ENCODE measurements at regions of chr11 and their contacts with region 1.

Region 1: DNA sequence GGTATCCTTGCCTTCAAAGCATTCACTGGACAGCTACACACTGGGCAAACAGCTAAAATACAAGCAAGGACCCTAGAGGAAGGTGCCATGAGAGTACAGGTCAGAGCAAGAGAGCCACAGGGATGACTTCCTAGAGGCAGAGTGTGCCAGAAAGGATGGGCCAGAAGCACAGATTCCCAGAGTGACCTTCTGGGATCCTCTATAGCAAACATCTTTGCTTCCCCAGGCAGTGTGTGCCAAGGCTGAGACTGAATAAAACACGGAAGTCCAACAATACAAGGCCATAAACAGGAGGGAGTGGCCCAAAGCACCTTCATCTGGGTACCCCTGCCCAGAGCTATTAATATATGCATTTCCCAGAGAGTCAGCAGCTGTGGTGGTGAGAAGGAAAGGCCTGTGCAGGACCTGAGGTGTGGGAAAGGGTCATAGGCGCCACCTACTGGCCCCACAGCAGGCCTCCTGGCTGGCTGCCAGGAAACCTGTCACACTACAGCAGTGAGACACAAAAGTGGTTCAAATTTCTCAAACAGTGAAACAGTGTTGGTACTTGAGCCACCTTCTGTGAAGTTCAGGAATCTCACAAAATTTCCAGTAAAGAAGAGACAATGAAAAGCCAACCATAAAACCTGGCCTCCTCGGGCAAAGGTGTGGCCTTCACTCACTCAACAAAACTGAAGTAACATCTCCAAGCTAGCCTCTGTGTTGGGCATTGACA is 20.3 kb downstream of the CLPB start:
- DNase-seq: peak; percentile 73 to 89
- H3K4me3 ChIP-seq: no peak overlapping the region
- H3K27ac ChIP-seq: no peak overlapping the region
- H3K4me1 ChIP-seq: no peaks in the 10 kb centered on the region
- H3K27me3 ChIP-seq: no peaks in the 10 kb centered on the region
- CTCF ChIP-seq: peak; percentile 96

Region 2: DNA sequence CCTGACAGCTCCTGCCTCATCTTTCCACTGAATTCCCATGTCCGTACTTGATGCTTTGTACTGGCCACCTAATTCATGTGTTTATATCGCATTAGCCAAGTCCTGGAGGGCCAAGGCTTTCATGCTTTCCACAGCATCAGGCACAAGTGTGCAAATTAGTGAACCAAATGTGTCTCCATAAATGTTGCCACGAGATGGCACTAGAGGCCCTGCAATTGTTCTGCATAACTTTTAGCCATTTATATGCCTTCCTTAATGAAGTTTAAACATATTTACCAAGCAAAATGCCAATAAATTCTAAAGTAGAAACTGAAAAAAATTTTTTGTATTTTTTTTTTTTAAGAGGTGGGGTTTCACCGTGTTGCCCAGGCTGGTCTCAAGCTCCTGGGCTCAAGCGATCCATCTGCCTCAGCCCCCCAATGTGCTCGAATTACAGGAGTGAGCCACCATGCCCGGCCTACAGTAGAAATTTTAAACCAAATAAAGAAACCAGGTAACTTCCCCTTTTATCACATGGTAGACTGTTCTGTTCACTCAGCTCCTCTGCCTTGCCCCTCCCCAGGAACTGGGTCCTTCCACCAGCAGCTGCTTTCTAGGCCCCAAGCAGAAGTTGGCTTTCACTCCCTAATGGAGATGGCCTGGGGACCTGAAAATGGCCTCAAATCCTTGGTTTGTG is 436.2 kb before region 1 on chr11:
- CTCF ChIA-PET with region 1: no interaction called
- POLR2A ChIA-PET with region 1: no interaction called
- intact Hi-C with region 1: loop called (anchors 1 kb)
- DNase-seq: peak; percentile 35 to 40
- H3K4me3 ChIP-seq: no peak overlapping the region
- H3K27ac ChIP-seq: no peak overlapping the region
- H3K4me1 ChIP-seq: no peaks in the 10 kb centered on the region
- H3K27me3 ChIP-seq: no peaks in the 10 kb centered on the region
- CTCF ChIP-seq: peak; percentile 85

Region 3: DNA sequence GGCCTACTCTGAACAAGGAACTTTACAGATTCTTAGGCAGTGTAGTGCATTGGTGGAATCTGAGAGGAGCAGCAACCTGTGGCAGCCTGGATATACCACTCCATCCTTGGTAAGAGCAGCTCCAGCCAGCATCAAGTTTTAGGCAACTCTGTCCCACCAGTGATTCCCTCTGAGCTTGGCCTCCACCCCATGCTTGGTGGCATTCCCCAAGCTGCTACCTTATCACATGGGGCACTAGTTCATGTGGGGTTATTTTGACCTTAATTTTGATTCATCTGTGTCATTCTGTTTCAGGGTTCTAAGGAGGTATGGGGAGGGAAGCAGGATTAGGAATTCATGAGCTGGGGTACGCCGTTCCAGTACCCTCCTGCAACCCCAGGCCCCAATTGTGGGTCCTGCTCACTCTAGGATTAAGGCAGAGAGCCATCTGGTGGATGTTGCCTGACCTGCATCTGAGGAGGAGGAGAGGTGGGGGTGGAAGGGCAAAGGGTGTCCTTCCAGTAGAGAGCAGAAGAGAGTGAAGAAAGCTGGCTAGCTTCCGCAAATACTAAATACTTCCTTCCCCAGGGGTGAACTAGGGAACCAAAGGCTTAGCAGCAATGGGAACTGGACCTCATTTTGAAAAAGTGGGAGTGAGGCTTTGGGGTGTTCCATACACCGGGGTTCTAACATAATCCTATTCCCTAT is 322.9 kb before region 1 on chr11:
- CTCF ChIA-PET with region 1: no interaction called
- POLR2A ChIA-PET with region 1: no interaction called
- intact Hi-C with region 1: loop called (anchors 1 kb)
- DNase-seq: peak in 1 of 2 experiments; percentile 60
- H3K4me3 ChIP-seq: no peak overlapping the region
- H3K27ac ChIP-seq: 0 out of 2 replicates have a peak overlapping the region, but pooled peaks have one; percentile 8
- H3K4me1 ChIP-seq: no peaks in the 10 kb centered on the region
- H3K27me3 ChIP-seq: no peaks in the 10 kb centered on the region
- CTCF ChIP-seq: peak; percentile 93

Region 4: GRCh38 chr11:72112321-72113219 is 301.5 kb before region 1 on chr11 and contains the start of gene ANAPC15:
- CTCF ChIA-PET with region 1: no interaction called
- POLR2A ChIA-PET with region 1: no interaction called
- intact Hi-C with region 1: loop called (anchors 1 kb)
- DNase-seq: peak; percentile 97 to 99
- H3K4me3 ChIP-seq: peak within 1 kb of the TSS; percentile 56
- H3K27ac ChIP-seq: peak within 1 kb of the TSS; percentile 70
- H3K4me1 ChIP-seq: peaks cover 14% of the 10 kb centered on the region
- H3K27me3 ChIP-seq: no peaks in the 10 kb centered on the region
- CTCF ChIP-seq: no peak
- total RNA-seq, gene ANAPC15: 77.2 and 97.8 TPM in 2 replicates

Region 5: DNA sequence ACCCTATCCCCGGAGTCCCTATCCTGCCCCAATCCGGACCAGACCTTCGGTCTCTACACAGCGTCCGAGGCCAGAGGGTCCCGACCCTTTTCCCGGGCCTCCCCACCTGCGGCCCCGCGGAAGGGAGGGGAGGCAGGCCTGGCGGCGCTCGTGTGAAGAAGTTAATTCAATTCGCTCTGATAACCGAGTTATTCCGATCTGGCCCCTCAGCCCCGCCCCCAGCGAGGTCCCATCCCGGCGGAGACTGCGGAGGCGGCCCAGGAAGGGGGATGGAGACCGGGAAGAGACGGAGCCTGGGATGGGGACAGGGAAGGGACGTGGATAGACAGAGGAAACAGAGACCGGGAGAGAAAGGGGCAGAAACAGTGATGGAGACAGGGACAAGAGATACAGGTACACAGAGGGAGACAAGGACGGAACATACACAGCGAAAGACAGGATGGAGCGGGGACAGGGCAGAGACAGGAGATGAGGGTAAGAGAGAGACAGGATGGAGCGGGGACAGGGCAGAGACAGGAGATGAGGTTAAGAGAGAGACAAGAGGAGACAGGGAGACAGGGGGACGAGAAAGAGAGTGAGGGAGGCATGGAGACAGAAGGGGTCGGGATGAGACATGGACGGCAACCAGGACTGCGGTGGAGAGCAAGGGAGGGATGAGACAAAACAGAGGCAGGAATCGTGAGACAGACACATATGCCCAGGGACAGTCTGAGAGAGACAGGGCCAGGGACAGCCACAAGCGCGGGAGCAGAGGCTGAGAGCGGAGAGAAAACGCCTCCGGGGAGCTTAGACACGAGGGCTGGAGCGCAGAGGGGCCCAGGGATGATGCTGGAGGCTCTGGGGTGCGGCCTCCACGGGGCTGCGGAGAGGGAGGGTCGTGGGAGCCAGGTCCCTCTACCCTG is 169.5 kb before region 1 on chr11:
- CTCF ChIA-PET with region 1: no interaction called
- POLR2A ChIA-PET with region 1: no interaction called
- intact Hi-C with region 1: loop called (anchors 5 kb)
- DNase-seq: no peak
- H3K4me3 ChIP-seq: no peak overlapping the region
- H3K27ac ChIP-seq: no peak overlapping the region
- H3K4me1 ChIP-seq: no peaks in the 10 kb centered on the region
- H3K27me3 ChIP-seq: peaks cover 31% of the 10 kb centered on the region; the same call in 1 of the 2 replicates
- CTCF ChIP-seq: no peak

Region 6: DNA sequence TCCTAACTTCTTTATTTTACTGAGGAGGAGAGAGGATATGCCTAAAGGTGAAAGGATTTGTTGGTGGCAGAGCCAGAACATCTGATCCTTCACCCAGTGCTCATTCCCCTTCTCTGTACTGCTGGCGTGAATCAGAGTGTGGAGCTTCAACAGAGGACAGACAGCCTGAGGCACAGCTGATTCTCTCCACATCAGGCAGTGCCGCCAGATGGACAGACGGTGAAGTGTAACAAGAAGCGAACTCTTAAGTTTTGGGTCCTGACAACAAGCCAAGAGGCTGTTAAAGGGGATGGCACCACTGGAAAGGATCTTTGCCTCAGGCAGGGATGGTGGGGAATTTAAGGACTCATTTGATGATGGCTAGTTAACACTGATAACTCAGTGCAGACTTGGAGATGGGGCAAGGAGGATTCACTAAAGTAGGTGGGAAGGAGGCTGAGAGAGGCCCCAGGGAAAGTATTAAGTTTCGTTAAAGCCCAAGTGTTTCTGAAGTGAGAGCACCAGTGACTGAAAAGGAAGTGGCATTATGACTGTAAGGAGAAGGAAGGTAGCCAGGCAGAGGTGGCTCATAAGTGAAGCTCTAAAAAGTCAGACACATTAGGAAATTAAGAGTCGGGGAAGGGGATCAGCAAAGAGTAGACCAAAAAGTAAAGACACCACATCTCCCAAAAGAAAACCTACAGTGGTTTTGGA is 61.1 kb before region 1 on chr11:
- CTCF ChIA-PET with region 1: no interaction called
- POLR2A ChIA-PET with region 1: no interaction called
- intact Hi-C with region 1: loop called (anchors 5 kb)
- DNase-seq: no peak
- H3K4me3 ChIP-seq: no peak overlapping the region
- H3K27ac ChIP-seq: no peak overlapping the region
- H3K4me1 ChIP-seq: no peaks in the 10 kb centered on the region
- H3K27me3 ChIP-seq: no peaks in the 10 kb centered on the region
- CTCF ChIP-seq: no peak

Region 7: DNA sequence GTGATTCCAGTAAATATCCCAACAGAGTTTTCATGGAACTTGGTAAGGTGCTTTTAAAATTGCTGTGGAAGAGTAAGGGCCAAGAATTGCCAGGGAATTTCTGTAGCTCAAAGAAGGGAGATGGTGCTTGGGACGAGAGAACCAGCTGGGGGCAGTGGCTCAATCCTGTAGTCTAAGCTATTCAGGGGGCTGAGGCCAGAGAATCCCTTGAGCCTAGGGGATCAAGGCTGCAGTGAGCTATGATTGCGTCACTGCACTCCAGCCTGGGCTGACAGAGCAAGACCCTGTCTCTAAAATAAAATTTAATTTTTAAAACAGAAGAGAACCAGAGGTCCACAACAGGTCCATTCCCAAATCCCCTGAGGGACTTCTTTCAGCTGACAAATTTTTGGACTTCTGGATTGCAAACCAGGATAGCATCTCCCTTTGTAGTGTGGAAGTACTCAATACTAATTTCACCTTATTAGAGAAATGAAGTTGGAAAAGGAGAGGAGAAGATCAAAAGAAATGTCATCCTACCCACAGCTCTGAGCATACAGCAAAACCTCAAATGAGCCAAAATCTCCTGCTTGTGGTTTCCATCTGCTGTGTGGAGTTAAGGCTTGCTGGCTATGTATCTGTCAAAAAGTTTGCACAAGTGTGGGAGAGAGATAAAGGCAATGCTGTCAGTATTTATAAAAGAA is 79.5 kb after region 1 on chr11:
- CTCF ChIA-PET with region 1: no interaction called
- POLR2A ChIA-PET with region 1: no interaction called
- intact Hi-C with region 1: no loop called
- DNase-seq: no peak
- H3K4me3 ChIP-seq: no peak overlapping the region
- H3K27ac ChIP-seq: no peak overlapping the region
- H3K4me1 ChIP-seq: no peaks in the 10 kb centered on the region
- H3K27me3 ChIP-seq: no peaks in the 10 kb centered on the region
- CTCF ChIP-seq: no peak

Region 8: DNA sequence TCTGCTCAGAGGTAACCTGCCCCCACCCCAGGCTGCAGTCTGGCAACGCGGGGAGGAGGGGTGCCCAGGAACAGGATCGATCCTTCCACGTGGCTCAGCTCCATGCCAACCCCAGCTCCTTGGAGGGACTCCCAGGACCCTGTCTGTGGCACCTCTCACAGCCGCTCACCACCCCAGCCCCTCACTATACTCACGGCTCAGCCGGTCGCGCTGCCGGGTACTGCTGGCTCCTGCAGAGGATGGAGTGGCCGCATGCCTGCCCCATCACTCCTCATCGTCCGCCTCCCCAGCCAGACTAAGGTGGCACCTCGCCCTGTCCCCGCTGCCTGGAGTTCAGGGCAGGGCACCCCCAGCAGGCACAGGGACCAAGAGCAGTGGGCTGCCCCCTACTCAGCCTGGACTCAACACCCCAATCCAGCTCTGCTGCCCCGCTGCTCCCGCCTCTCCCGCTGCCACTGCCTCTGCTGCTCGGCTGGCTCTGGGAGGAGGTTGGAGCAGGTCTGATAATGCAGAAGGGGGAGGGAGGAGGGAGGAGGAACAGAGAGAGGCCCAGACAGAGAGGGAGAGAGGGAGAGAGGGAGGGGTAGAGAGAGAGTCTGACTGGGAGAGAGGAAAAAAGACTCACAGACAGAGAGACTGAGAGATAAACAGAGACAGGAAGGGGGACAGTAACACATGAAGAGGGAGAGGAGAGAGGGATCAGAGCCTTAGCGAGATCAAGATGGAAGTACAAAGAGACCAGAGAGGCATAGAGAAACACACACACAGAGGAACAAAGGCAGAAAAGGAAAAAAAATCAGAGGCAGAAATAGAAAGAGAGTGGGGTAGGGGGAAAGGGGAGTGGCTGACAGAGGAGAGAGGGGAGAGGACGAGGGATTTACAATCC is 260.1 kb after region 1 on chr11 and contains the start of gene PDE2A:
- CTCF ChIA-PET with region 1: no interaction called
- POLR2A ChIA-PET with region 1: no interaction called
- intact Hi-C with region 1: no loop called
- DNase-seq: no peak
- H3K4me3 ChIP-seq: no peak within 1 kb of the TSS
- H3K27ac ChIP-seq: no peak within 1 kb of the TSS
- H3K4me1 ChIP-seq: no peaks in the 10 kb centered on the region
- H3K27me3 ChIP-seq: peaks cover 90% of the 10 kb centered on the region
- CTCF ChIP-seq: no peak
- total RNA-seq, gene PDE2A: 9.6 and 12.0 TPM in 2 replicates

Measured in PC-9 (cell line).